SK-N-SH (cell line): ENCODE measurements at regions of chr2 and their contacts with region 1.

Region 1: GRCh38 chr2:17171446-17172049 is 346.7 kb downstream of the RAD51AP2 start:
- DNase-seq: peak; percentile 66
- H3K4me3 ChIP-seq: no peak overlapping the region; a peak in 1 of 4 replicates
- H3K27ac ChIP-seq: no peak overlapping the region
- H3K4me1 ChIP-seq: peaks cover 0 to 3% of the 10 kb centered on the region in 2 experiments; a peak in 1 of 4 replicates
- H3K27me3 ChIP-seq: no peaks in the 10 kb centered on the region
- CTCF ChIP-seq: peak; percentile 65
- EP300 ChIP-seq: 0 out of 4 replicates have a peak, but pooled peaks of 1 of the 2 experiments have one; percentile 15
- RAD21 ChIP-seq: peak; percentile 70

Region 2: DNA sequence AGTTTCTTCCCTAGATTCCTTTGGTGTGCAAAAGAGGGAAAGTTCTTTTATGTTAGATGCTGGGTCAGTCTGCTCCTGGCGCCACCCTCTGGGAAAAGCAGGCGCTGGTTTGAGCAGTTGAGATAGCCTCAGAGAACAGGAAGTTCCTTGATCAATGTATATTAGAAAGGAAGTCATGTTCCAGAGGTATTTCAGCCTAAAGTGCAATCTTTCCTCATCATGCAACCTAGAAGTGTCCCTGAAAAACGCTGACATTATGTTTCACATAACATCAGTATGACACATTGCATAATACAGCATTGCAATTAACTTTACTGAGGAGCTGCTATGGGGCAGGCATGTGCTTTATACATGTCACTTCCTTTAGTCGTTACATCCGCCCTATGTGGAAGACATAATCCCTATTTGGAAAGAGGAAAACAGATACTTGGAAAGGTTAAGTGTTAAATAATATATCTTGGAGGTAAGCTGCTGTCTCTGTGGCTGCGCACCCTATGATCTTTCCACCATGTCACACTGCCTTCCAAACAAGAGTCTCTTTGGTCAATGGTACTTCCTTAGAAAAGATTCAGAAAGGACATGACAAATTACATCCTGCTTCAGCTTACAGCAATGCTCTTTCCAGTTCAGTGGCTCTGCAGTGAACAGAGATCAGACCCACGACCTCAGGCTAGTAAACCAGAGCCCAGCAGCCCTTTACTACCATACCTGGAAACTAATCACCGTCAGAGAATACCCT is 23.0 kb before region 1 on chr2:
- CTCF ChIA-PET with region 1: interaction called, 14 read pairs
- POLR2A ChIA-PET with region 1: no interaction called
- DNase-seq: peak; percentile 53
- H3K4me3 ChIP-seq: no peak overlapping the region
- H3K27ac ChIP-seq: no peak overlapping the region
- H3K4me1 ChIP-seq: peaks cover 0 to 8% of the 10 kb centered on the region in 2 experiments; a peak in 1 of 4 replicates
- H3K27me3 ChIP-seq: no peaks in the 10 kb centered on the region
- CTCF ChIP-seq: peak; percentile 60
- EP300 ChIP-seq: no peak; a peak in 1 of 4 replicates
- RAD21 ChIP-seq: peak; percentile 79

Region 3: GRCh38 chr2:17160594-17160993 is 11.0 kb before region 1 on chr2:
- CTCF ChIA-PET with region 1: interaction called, 34 read pairs
- POLR2A ChIA-PET with region 1: no interaction called
- DNase-seq: no peak
- H3K4me3 ChIP-seq: no peak overlapping the region
- H3K27ac ChIP-seq: no peak overlapping the region
- H3K4me1 ChIP-seq: no peaks in the 10 kb centered on the region; a peak in 1 of 4 replicates
- H3K27me3 ChIP-seq: no peaks in the 10 kb centered on the region
- CTCF ChIP-seq: no peak
- EP300 ChIP-seq: no peak
- RAD21 ChIP-seq: no peak

Region 4: DNA sequence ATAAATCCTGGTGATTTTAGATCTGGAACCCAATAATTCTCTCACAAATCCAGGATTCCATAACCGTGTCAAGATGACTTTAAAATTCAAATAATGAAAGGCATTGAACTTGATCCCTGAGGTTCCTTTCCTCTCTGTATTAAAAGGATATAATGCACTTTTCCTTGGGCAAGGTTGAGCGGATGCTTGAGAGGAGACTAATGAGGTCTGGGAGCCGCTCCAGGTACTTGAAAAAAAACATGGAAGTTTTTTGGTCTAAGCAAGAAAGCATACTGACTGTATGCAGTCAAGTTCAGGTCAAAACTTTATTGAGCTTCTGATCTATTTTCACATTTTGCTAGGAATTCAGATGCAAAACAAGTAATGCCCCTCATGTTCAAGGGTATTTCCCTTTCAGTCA is 28.2 kb after region 1 on chr2:
- CTCF ChIA-PET with region 1: interaction called, 19 read pairs
- POLR2A ChIA-PET with region 1: no interaction called
- DNase-seq: no peak
- H3K4me3 ChIP-seq: no peak overlapping the region
- H3K27ac ChIP-seq: no peak overlapping the region
- H3K4me1 ChIP-seq: peaks cover 0 to 5% of the 10 kb centered on the region in 2 experiments; a peak in 2 of 4 replicates
- H3K27me3 ChIP-seq: no peaks in the 10 kb centered on the region
- CTCF ChIP-seq: no peak
- EP300 ChIP-seq: no peak
- RAD21 ChIP-seq: no peak

Region 5: GRCh38 chr2:17226941-17227490 is 55.5 kb after region 1 on chr2:
- CTCF ChIA-PET with region 1: no interaction called
- POLR2A ChIA-PET with region 1: no interaction called
- DNase-seq: no peak
- H3K4me3 ChIP-seq: no peak overlapping the region
- H3K27ac ChIP-seq: no peak overlapping the region
- H3K4me1 ChIP-seq: peaks cover 0 to 2% of the 10 kb centered on the region in 2 experiments; a peak in 2 of 4 replicates
- H3K27me3 ChIP-seq: no peaks in the 10 kb centered on the region
- CTCF ChIP-seq: no peak
- EP300 ChIP-seq: no peak
- RAD21 ChIP-seq: no peak